Dorsolateral prefrontal cortex (tissue), 120 donors: ENCODE measurements at regions of chr18 and their contacts with region 1.

Region 1: DNA sequence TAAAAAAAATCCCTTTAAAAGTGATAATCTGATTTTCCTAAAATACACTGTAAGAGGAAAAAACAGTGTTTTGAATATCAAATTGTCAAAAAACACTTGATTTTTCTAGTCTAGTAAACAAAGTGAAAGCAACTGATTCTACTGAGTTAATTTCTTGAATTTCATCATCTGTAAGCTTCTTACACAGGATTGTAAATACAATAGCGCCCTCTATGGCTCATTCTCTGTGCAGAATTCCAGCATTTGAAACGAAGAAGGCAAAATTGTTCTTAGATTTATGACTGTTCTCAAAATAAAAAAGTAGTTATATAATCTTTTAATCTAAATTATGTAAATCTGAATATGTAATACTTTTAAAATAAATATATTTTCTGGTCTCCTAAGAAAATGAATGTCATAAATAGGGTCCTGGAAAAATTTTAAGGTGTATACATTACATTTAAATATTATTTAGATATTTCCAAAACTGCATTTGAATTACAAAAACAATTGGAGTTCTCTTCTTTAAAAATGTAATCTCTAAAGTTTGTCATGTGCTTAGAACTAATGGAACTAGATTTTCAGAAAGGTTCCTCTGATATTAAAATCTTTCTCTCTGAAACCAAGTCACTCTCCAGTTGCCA is 176.9 kb upstream of the MC4R start:
- DNase-seq: peak in 1 of 10 donors; percentile 36
- H3K4me3 ChIP-seq: peak overlapping the region in 28 of 59 donors; percentile 2 to 51 (median 28)
- H3K27ac ChIP-seq: no peak overlapping the region
- H3K27me3 ChIP-seq: peaks cover 0 to 11% (median 0%) of the 10 kb centered on the region in 45 donors
- CTCF ChIP-seq: peak; percentile 60 to 100 (median 90)

Region 2: DNA sequence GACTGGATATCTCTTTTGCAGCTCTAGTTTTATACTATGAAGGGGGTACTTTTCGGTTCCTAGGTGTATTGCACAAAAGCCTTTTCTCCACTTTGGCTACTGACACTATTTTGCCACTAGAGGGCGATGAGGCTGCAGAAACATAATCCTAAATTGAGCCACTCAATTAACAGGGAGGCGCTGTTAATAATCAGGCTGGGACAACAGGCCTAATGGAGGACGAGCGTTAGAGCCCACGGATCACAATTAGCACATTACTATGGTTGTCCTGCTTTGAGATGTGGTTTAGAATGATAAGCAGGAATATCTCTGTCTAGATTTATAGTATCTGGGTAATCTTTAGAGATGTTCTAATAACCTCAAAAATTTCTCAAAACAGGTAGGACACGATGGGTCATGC is 711.9 kb before region 1 on chr18:
- intact Hi-C with region 1: loop called in 1 of 2 experiments (anchors 10 kb)
- DNase-seq: peak in 1 of 10 donors; percentile 14
- H3K4me3 ChIP-seq: no peak overlapping the region
- H3K27ac ChIP-seq: no peak overlapping the region
- H3K27me3 ChIP-seq: peaks cover 0 to 10% (median 0%) of the 10 kb centered on the region in 45 donors
- CTCF ChIP-seq: peak; percentile 65 to 93 (median 79)

Region 3: DNA sequence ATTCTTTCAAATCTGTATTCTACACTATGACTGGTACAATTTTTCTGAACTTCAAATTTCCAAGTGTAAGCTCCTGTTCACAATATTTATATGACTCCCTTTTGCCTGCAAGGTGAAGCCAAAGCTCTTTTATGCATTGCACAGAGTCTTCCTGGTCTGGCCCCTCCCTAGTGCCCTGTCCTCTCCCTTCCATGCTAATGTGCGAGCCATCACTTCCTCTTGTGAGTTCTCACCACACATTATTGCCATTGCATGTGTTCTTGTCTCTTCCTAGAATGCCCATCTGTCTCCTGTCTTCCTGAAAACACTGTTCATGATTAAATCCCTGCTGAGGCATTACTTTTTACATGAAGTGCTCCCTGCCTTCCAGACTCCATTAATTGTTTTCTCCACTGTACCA is 346.7 kb before region 1 on chr18:
- intact Hi-C with region 1: no loop called
- DNase-seq: no peak
- H3K4me3 ChIP-seq: no peak overlapping the region
- H3K27ac ChIP-seq: no peak overlapping the region
- H3K27me3 ChIP-seq: peaks cover 0 to 6% (median 0%) of the 10 kb centered on the region in 45 donors
- CTCF ChIP-seq: no peak